Panc1 (cell line): ENCODE measurements at regions of chr15 and their contacts with region 1.

Region 1: GRCh38 chr15:83380682-83381081 is 66.5 kb upstream of the SH3GL3 start:
- DNase-seq: peak; percentile 8
- ATAC-seq: peak; percentile 91
- H3K4me3 ChIP-seq: no peak overlapping the region
- H3K27ac ChIP-seq: no peak overlapping the region
- H3K4me1 ChIP-seq: no peaks in the 10 kb centered on the region
- H3K27me3 ChIP-seq: no peaks in the 10 kb centered on the region; the same call in 1 of the 2 replicates
- CTCF ChIP-seq: peak; percentile 81

Region 2: DNA sequence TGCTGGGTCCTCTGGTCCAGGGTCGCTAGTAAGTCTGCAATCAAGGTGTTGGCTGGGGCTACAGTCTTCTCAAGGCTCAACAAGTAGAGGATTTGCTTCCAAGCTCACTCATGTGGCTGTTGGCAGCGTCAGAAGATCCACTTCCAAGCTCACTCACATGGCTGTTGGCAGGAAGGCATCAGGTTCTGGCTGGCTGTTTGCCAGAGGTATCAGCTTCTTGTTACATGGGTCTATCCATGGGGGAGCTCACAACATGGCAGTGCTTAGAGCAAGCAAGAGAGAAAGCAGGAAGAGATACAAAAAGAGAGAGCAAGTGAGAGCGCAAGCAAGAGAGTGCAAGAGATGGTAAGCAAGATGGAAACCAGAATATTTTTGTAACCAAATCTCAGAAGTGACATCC is 81.2 kb before region 1 on chr15:
- CTCF ChIA-PET with region 1: no interaction called
- POLR2A ChIA-PET with region 1: no interaction called
- in situ Hi-C with region 1: no loop called
- intact Hi-C with region 1: loop called (anchors 2 kb)
- DNase-seq: no peak
- ATAC-seq: no peak
- H3K4me3 ChIP-seq: no peak overlapping the region
- H3K27ac ChIP-seq: no peak overlapping the region
- H3K4me1 ChIP-seq: no peaks in the 10 kb centered on the region
- H3K27me3 ChIP-seq: no peaks in the 10 kb centered on the region; the same call in 1 of the 2 replicates
- CTCF ChIP-seq: no peak

Region 3: DNA sequence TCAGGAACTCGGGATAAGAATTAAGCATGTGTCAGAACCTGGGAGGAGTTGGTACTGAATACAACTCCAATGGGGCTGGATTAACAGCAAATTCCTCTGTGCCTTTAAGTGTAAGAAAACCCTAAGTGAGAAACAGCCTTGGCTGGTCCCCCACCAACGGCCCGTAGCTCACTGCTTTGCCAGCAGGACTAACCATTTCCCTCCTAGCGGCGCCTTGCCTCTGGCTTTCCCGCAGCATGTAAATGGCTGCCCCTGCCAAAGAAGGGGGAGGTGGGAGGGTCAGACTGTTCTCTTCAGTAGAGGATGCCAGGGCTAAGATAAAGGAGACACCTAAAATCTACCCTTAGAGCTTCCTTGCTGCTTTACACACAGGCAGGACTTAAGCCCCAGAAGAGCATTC is 15.4 kb after region 1 on chr15:
- CTCF ChIA-PET with region 1: no interaction called
- POLR2A ChIA-PET with region 1: interaction called, 13 read pairs
- in situ Hi-C with region 1: no loop called
- intact Hi-C with region 1: no loop called
- DNase-seq: no peak
- ATAC-seq: no peak
- H3K4me3 ChIP-seq: no peak overlapping the region
- H3K27ac ChIP-seq: no peak overlapping the region
- H3K4me1 ChIP-seq: no peaks in the 10 kb centered on the region
- H3K27me3 ChIP-seq: peaks cover 5% of the 10 kb centered on the region
- CTCF ChIP-seq: no peak

Region 4: GRCh38 chr15:83487519-83487918 is 106.8 kb after region 1 on chr15:
- CTCF ChIA-PET with region 1: no interaction called
- POLR2A ChIA-PET with region 1: no interaction called
- in situ Hi-C with region 1: no loop called
- intact Hi-C with region 1: no loop called
- DNase-seq: no peak
- ATAC-seq: no peak
- H3K4me3 ChIP-seq: no peak overlapping the region
- H3K27ac ChIP-seq: no peak overlapping the region
- H3K4me1 ChIP-seq: no peaks in the 10 kb centered on the region
- H3K27me3 ChIP-seq: no peaks in the 10 kb centered on the region
- CTCF ChIP-seq: no peak